Head of caudate nucleus (tissue), 42 donors: ENCODE measurements at regions of chr1 and their contacts with region 1.

Region 1: GRCh38 chr1:241847796-241848685 is at the start of gene EXO1:
- DNase-seq: peak; percentile 85 to 97 (median 92)

Region 2: GRCh38 chr1:241519308-241520079 is 328.5 kb before region 1 on chr1 and contains the start of gene FH:
- intact Hi-C with region 1: loop called (anchors 10 kb)
- DNase-seq: peak; percentile 92 to 99 (median 98)

Region 3: GRCh38 chr1:241640029-241640818 is 207.8 kb before region 1 on chr1 and contains the starts of genes CHML and OPN3:
- intact Hi-C with region 1: loop called (anchors 5 kb)
- DNase-seq: peak; percentile 81 to 98 (median 95)

Region 4: DNA sequence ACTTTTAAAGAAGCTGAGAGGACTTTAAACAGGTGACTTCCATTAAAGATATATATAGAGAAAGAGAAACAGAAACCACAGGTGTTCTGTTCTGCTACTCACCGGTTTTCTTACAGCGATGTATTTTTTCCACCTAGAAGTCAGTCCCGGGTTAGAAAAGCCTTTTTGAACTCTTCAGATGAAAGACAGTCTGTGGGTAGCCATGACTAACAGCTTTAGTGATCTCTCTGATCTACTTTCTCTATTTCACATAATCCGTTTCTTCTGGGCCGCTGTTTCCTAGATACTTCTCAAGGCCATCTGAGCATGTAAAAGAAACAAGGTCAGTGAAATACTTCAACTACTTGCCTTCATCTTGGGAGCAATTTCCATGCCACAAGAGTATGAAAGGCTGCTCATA is 170.8 kb before region 1 on chr1:
- intact Hi-C with region 1: no loop called
- DNase-seq: peak in 1 of 42 donors; percentile 33

Region 5: GRCh38 chr1:242033447-242033846 is 185.4 kb after region 1 on chr1:
- intact Hi-C with region 1: no loop called
- DNase-seq: no peak

Region 6: DNA sequence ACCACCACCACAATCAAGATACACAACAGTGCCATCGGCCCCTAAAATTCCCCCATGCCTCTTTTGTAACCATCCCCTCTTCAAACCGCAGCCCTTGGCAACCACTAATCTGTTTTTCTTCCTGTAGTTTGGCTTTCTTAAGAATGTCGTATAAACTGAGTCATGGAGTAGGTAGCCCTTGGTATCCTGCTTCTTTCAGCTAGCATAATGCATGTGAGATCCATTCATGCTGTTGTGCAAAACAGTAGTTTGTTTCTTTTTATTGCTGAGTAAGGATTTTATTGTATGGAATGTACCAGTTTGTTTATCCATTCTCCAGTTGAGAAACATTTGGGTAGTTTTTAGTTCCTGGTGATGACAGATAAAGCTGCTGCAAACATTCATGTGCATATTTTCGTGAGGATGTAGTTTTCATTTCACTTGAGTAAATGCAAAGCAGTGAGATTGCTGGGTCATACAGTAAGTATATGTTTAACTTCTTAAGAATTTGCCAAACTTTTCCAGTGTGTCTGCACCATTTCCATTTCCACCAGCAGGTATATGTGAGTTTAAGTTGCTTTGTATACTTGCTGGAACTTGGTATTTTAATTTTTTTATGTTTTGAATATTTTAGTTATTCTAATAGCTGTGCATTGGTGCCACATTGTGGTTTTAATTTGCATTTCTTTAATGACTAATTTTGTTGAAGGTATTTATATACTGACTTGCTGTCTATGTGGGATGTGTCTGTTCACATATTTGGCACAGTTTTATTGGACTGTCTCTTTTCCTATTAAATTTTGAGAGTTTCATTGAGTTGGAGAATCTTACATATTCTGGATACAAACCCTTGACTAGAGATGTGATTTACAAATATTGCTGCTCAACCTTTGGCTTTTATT is 299.3 kb after region 1 on chr1:
- intact Hi-C with region 1: no loop called
- DNase-seq: no peak

Region 7: DNA sequence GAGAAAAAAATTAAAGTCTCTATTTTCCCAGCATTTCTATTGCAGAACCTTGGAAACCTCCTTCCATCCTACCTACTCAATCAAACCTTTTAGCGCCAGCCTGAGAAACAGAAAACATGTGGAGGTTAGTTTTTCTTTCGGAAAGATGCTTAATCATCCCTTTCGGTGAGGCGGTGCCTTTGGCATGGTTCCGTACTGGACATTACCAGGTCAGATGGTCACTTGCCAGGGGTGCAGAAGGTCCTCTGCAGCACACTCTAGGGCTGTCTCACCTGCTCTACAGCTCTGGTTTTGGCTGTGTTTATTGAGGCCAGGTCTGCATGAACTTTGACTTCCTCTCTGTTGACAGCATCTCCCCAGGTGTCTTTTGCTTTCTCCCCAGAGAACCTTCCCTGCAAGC is 554.9 kb after region 1 on chr1:
- intact Hi-C with region 1: no loop called
- DNase-seq: no peak